ENCODE measurements at regions of chr17 and their contacts with region 1.

Region 1: GRCh38 chr17:70144260-70144846 is 25.0 kb upstream of the KCNJ2 start:
- DNase-seq: no peak
- ATAC-seq: no peak
- H3K4me3 ChIP-seq: no peak overlapping the region
- H3K27ac ChIP-seq: no peak overlapping the region
- H3K4me1 ChIP-seq: peaks cover 0 to 1% of the 10 kb centered on the region in 2 donors
- H3K27me3 ChIP-seq: no peaks in the 10 kb centered on the region

Region 2: GRCh38 chr17:69574257-69575197 is 569.8 kb before region 1 on chr17:
- intact Hi-C with region 1: loop called (anchors 2 kb)
- DNase-seq: no peak
- ATAC-seq: no peak
- H3K4me3 ChIP-seq: no peak overlapping the region
- H3K27ac ChIP-seq: no peak overlapping the region
- H3K4me1 ChIP-seq: peaks cover 0 to 1% of the 10 kb centered on the region in 2 donors
- H3K27me3 ChIP-seq: no peaks in the 10 kb centered on the region

Measured in aorta (tissue), 5 donors.